CD8-positive, alpha-beta memory T cell (primary cell): ENCODE measurements at regions of chr11 and their contacts with region 1.

Region 1: DNA sequence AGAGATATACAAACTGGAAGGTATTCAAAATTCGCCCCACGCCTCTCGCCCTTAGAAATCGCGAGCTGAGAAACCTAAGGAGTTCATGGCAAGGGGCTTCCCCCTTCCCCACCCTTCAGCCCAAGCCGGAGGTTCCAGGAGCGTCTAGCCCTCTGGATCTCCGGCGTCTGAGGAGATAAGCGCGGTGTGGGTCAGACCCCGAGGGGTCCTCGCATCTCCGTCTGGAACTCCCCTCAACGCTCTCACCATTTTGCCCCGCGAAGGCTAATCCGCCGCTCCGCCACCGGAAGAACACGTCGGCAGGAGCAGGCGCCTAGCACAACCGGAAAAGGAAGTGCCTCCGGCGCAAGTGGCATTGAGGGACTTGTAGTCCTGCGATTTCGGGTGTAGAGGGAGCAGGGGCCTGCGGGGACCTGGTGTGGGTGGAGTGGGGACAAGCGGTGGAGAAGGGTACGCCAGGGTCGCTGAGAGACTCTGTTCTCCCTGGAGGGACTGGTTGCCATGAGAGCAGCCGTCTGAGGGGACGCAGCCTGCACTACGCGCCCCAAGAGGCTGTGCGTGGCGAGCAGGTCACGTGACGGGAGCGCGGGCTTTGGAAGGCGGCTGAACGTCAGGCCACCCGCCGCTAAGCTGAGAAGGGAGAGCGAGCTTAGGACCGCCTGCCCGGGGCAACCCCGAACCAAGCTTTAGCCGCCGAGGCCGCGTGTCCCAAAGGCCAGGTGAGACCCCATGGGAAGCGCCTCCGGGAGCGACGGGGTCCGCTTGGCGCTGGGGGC is at the starts of genes FEN1 and TMEM258:
- DNase-seq: peak; percentile 80 to 91 (median 85)
- H3K4me3 ChIP-seq: peak within 1 kb of the TSS; percentile 92
- H3K4me3 Mint-ChIP-seq: peak within 1 kb of the TSS; percentile 91 to 100 (median 92)
- H3K27ac ChIP-seq: peak within 1 kb of the TSS; percentile 94
- H3K27ac Mint-ChIP-seq: peak within 1 kb of the TSS; percentile 96 to 100 (median 99)
- H3K4me1 ChIP-seq: peaks cover 17% of the 10 kb centered on the region
- H3K4me1 Mint-ChIP-seq: peaks cover 24 to 49% (median 36%) of the 10 kb centered on the region in 3 donors
- H3K27me3 ChIP-seq: no peaks in the 10 kb centered on the region
- H3K27me3 Mint-ChIP-seq: no peaks in the 10 kb centered on the region
- total RNA-seq, gene FEN1: 112 to 121 TPM
- total RNA-seq, gene TMEM258: 148 to 152 TPM

Region 2: GRCh38 chr11:61816736-61817455 is 24.4 kb after region 1 on chr11 and contains the start of gene FADS1:
- CTCF ChIA-PET with region 1: interaction called, 31 read pairs
- POLR2A ChIA-PET with region 1: interaction called, 12 read pairs
- DNase-seq: peak; percentile 51 to 75 (median 60)
- H3K4me3 ChIP-seq: peak within 1 kb of the TSS; percentile 82
- H3K4me3 Mint-ChIP-seq: peak within 1 kb of the TSS; percentile 87 to 97 (median 90)
- H3K27ac ChIP-seq: peak within 1 kb of the TSS; percentile 85
- H3K27ac Mint-ChIP-seq: peak within 1 kb of the TSS in 6 of 8 donors; percentile 24 to 96 (median 88)
- H3K4me1 ChIP-seq: peaks cover 10% of the 10 kb centered on the region
- H3K4me1 Mint-ChIP-seq: peaks cover 11 to 25% (median 16%) of the 10 kb centered on the region in 3 donors
- H3K27me3 ChIP-seq: peaks cover 3% of the 10 kb centered on the region
- H3K27me3 Mint-ChIP-seq: peaks cover 29 to 34% of the 10 kb centered on the region in 2 donors
- total RNA-seq, gene FADS1: 6.3 TPM

Region 3: GRCh38 chr11:62108017-62108750 is 315.7 kb after region 1 on chr11:
- CTCF ChIA-PET with region 1: interaction called, 68 read pairs
- POLR2A ChIA-PET with region 1: no interaction called
- DNase-seq: peak in 3 of 5 donors; percentile 21 to 69 (median 52)
- H3K4me3 ChIP-seq: no peak overlapping the region
- H3K4me3 Mint-ChIP-seq: peak overlapping the region in 1 of 7 donors; percentile 9
- H3K27ac ChIP-seq: no peak overlapping the region
- H3K27ac Mint-ChIP-seq: no peak overlapping the region
- H3K4me1 ChIP-seq: peaks cover 14% of the 10 kb centered on the region
- H3K4me1 Mint-ChIP-seq: peaks cover 12 to 16% (median 16%) of the 10 kb centered on the region in 3 donors
- H3K27me3 ChIP-seq: no peaks in the 10 kb centered on the region
- H3K27me3 Mint-ChIP-seq: peaks cover 2 to 5% of the 10 kb centered on the region in 2 donors